PC-9 (cell line): ENCODE measurements at regions of chr15 and their contacts with region 1.

Region 1: GRCh38 chr15:64180235-64180837 is 17.5 kb upstream of the PPIB start:
- DNase-seq: no peak
- H3K4me3 ChIP-seq: no peak overlapping the region
- H3K27ac ChIP-seq: no peak overlapping the region
- H3K4me1 ChIP-seq: no peaks in the 10 kb centered on the region
- H3K27me3 ChIP-seq: no peaks in the 10 kb centered on the region
- CTCF ChIP-seq: no peak

Region 2: DNA sequence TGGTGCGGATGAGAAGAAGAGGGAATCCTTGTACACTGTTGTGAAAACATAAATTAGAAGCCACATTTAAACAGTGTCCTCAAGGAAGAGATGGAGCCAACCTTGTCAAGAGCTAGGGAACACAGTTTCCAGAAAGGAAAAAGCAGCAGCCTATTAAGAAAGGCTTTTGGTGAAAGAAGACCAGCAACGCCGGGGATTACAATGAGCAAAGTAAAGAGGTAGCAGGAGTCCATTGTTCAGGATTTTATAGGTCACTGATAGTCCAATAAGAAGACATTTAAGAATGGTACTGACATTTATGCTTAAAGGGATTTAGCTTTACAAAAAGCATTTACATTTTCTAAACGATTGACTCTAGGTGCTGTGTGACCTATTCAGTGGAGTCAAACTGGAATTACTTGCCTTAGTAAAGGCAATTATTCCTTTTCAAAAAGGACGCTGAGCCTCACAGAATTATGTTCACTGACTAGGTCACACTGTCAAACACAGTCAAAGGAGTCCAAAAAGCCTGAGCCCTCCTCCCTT is 134.9 kb after region 1 on chr15:
- CTCF ChIA-PET with region 1: no interaction called
- POLR2A ChIA-PET with region 1: no interaction called
- intact Hi-C with region 1: no loop called
- DNase-seq: no peak
- H3K4me3 ChIP-seq: no peak overlapping the region
- H3K27ac ChIP-seq: no peak overlapping the region
- H3K4me1 ChIP-seq: no peaks in the 10 kb centered on the region
- H3K27me3 ChIP-seq: no peaks in the 10 kb centered on the region
- CTCF ChIP-seq: no peak

Region 3: GRCh38 chr15:64688770-64689169 is 508.4 kb after region 1 on chr15:
- CTCF ChIA-PET with region 1: interaction called, 14 read pairs
- POLR2A ChIA-PET with region 1: no interaction called
- intact Hi-C with region 1: no loop called
- DNase-seq: no peak
- H3K4me3 ChIP-seq: no peak overlapping the region
- H3K27ac ChIP-seq: no peak overlapping the region
- H3K4me1 ChIP-seq: no peaks in the 10 kb centered on the region
- H3K27me3 ChIP-seq: no peaks in the 10 kb centered on the region
- CTCF ChIP-seq: no peak